Mammary epithelial cell (primary cell): ENCODE measurements at regions of chr6 and their contacts with region 1.

Region 1: GRCh38 chr6:156279261-156279969 is 497.8 kb upstream of the ARID1B start:
- DNase-seq: no peak
- H3K4me3 ChIP-seq: no peak overlapping the region
- H3K27ac ChIP-seq: no peak overlapping the region
- H3K4me1 ChIP-seq: no peaks in the 10 kb centered on the region
- H3K27me3 ChIP-seq: no peaks in the 10 kb centered on the region
- CTCF ChIP-seq: no peak

Region 2: GRCh38 chr6:155915651-155916050 is 363.8 kb before region 1 on chr6:
- CTCF ChIA-PET with region 1: no interaction called
- dilution Hi-C with region 1: no loop called
- in situ Hi-C with region 1: no loop called
- intact Hi-C with region 1: no loop called
- DNase-seq: no peak
- H3K4me3 ChIP-seq: no peak overlapping the region
- H3K27ac ChIP-seq: no peak overlapping the region
- H3K4me1 ChIP-seq: no peaks in the 10 kb centered on the region
- H3K27me3 ChIP-seq: no peaks in the 10 kb centered on the region
- CTCF ChIP-seq: no peak

Region 3: GRCh38 chr6:156199182-156199581 is 80.2 kb before region 1 on chr6:
- CTCF ChIA-PET with region 1: no interaction called
- dilution Hi-C with region 1: no loop called
- in situ Hi-C with region 1: no loop called
- intact Hi-C with region 1: no loop called
- DNase-seq: no peak
- H3K4me3 ChIP-seq: no peak overlapping the region
- H3K27ac ChIP-seq: no peak overlapping the region
- H3K4me1 ChIP-seq: no peaks in the 10 kb centered on the region
- H3K27me3 ChIP-seq: no peaks in the 10 kb centered on the region
- CTCF ChIP-seq: no peak

Region 4: DNA sequence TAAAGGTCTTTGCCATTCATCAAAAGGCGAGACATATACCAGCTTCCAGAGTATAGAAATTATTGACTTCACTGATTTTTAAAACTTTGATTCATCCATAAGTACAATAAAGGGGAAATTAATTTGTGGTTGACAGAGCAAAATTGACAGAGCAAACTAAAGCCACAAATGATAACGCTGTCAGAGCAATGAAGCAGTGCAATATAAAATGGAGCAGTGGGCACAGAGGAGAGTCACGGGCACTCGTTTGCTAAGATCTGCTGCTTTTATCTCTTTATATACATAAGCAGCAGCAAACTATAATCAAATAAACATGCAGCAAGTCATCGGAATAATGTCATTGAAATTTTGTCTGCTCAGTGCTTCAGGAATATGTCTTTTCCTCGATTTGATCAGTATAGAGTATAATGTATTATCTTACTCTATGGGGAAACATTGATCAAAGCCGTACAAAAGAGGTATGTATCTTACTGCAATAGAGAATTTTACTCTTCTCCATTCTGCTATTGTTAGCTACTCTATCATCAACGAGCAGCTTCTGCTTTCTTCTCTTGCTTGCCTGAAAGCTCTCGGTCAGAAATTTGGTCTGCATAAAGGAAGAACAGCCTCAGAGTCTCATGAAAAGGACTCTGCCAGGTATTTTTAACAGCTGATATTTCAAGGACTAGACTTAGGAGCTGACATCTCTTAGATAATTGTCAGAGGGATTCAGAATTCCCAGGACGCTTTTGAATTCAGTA is 48.2 kb before region 1 on chr6:
- CTCF ChIA-PET with region 1: no interaction called
- dilution Hi-C with region 1: no loop called
- in situ Hi-C with region 1: no loop called
- intact Hi-C with region 1: loop called (anchors 5 kb)
- DNase-seq: no peak
- H3K4me3 ChIP-seq: no peak overlapping the region
- H3K27ac ChIP-seq: no peak overlapping the region
- H3K4me1 ChIP-seq: no peaks in the 10 kb centered on the region
- H3K27me3 ChIP-seq: no peaks in the 10 kb centered on the region
- CTCF ChIP-seq: no peak